B cell (primary cell): ENCODE measurements at regions of chr6 and their contacts with region 1.

Region 1: DNA sequence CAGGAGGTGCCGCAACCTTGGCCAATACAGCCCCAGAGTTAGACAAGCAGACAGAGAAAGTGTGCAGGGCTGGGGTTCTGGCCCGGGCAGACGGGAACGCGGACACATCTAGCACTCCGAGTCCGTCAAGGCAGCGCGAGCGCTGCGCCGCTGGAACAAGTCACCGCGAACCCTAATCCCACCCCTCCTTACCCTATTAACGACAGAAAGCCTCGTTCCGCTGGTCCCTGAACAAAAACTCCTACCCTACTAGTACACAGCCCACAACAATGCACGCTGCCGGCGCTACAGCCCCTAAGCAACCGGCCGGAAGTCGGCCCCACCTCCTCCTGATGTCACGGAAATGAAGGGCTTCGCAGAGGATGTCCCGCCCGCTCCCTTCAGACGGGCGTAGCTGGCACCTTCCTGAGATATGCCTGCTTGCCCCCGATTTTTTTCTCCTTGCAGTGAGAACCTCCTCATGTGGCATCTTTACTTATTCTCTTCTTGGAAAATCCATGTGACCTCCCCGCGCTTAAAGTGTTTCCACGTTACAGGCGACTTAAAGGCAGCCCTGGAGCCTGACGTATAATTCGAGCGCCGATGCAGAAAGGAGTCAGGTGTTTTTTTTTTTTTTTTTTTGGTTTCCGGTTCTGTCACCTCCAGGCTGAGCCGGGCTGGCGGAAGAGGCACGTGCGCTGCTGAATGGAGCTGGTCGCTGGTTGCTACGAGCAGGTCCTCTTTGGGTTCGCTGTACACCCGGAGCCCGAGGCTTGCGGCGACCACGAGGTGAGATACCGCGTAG is at the starts of genes C6orf52 and PAK1IP1:
- DNase-seq: peak; percentile 98
- ATAC-seq: peak; percentile 94
- H3K4me3 ChIP-seq: peak within 1 kb of the TSS; percentile 73 to 97 (median 95)
- H3K4me3 Mint-ChIP-seq: peak within 1 kb of the TSS; percentile 97
- H3K27ac ChIP-seq: peak within 1 kb of the TSS; percentile 96 to 99
- H3K27ac Mint-ChIP-seq: peak within 1 kb of the TSS; percentile 100
- H3K4me1 ChIP-seq: peaks cover 16 to 28% of the 10 kb centered on the region in 2 donors
- H3K4me1 Mint-ChIP-seq: peaks cover 30% of the 10 kb centered on the region
- H3K27me3 ChIP-seq: no peaks in the 10 kb centered on the region
- H3K27me3 Mint-ChIP-seq: no peaks in the 10 kb centered on the region
- CTCF ChIP-seq: no peak
- total RNA-seq, gene C6orf52: 1.2 TPM in 1 of 2 replicates, not detected in the other
- total RNA-seq, gene PAK1IP1: 6.1 TPM in 2 replicates

Region 2: GRCh38 chr6:10722820-10723566 is 28.5 kb after region 1 on chr6 and contains the start of gene TMEM14C:
- CTCF ChIA-PET with region 1: interaction called, 10 read pairs
- POLR2A ChIA-PET with region 1: interaction called, 16 read pairs
- intact Hi-C with region 1: loop called (anchors 1 kb)
- DNase-seq: peak; percentile 82
- ATAC-seq: peak; percentile 99
- H3K4me3 ChIP-seq: peak within 1 kb of the TSS; percentile 52 to 82 (median 70)
- H3K4me3 Mint-ChIP-seq: peak within 1 kb of the TSS; percentile 98
- H3K27ac ChIP-seq: peak within 1 kb of the TSS; percentile 1 to 67
- H3K27ac Mint-ChIP-seq: peak within 1 kb of the TSS; percentile 95
- H3K4me1 ChIP-seq: peaks cover 16 to 31% of the 10 kb centered on the region in 2 donors
- H3K4me1 Mint-ChIP-seq: peaks cover 42% of the 10 kb centered on the region
- H3K27me3 ChIP-seq: no peaks in the 10 kb centered on the region
- H3K27me3 Mint-ChIP-seq: no peaks in the 10 kb centered on the region
- CTCF ChIP-seq: no peak
- total RNA-seq, gene TMEM14C: 25.0 and 31.7 TPM in 2 replicates

Region 3: GRCh38 chr6:10847684-10848083 is 153.2 kb after region 1 on chr6:
- CTCF ChIA-PET with region 1: no interaction called
- POLR2A ChIA-PET with region 1: no interaction called
- intact Hi-C with region 1: no loop called
- DNase-seq: no peak
- ATAC-seq: no peak
- H3K4me3 ChIP-seq: no peak overlapping the region
- H3K4me3 Mint-ChIP-seq: no peak overlapping the region
- H3K27ac ChIP-seq: no peak overlapping the region
- H3K27ac Mint-ChIP-seq: no peak overlapping the region
- H3K4me1 ChIP-seq: no peaks in the 10 kb centered on the region
- H3K4me1 Mint-ChIP-seq: no peaks in the 10 kb centered on the region
- H3K27me3 ChIP-seq: no peaks in the 10 kb centered on the region
- H3K27me3 Mint-ChIP-seq: peaks cover 8% of the 10 kb centered on the region
- CTCF ChIP-seq: peak; percentile 68